ENCODE measurements at regions of chr15 and their contacts with region 1.

Region 1: GRCh38 chr15:25464784-25465183 is 26.0 kb upstream of the UBE3A start:
- DNase-seq: no peak
- ATAC-seq: peak in 1 of 3 donors; percentile 24
- H3K4me3 ChIP-seq: no peak overlapping the region
- H3K4me3 Mint-ChIP-seq: no peak overlapping the region
- H3K27ac ChIP-seq: no peak overlapping the region
- H3K27ac Mint-ChIP-seq: peak overlapping the region in 1 of 2 donors; percentile 15
- H3K4me1 ChIP-seq: no peaks in the 10 kb centered on the region
- H3K4me1 Mint-ChIP-seq: peaks cover 9% of the 10 kb centered on the region in 2 donors
- H3K27me3 ChIP-seq: peaks cover 3% of the 10 kb centered on the region
- H3K27me3 Mint-ChIP-seq: peaks cover 0 to 2% of the 10 kb centered on the region in 2 donors
- CTCF ChIP-seq: no peak

Region 2: GRCh38 chr15:25410649-25411048 is 54.1 kb before region 1 on chr15:
- intact Hi-C with region 1: loop called (anchors 5 kb)
- DNase-seq: no peak
- ATAC-seq: no peak
- H3K4me3 ChIP-seq: no peak overlapping the region
- H3K4me3 Mint-ChIP-seq: no peak overlapping the region
- H3K27ac ChIP-seq: no peak overlapping the region
- H3K27ac Mint-ChIP-seq: no peak overlapping the region
- H3K4me1 ChIP-seq: peaks cover 6% of the 10 kb centered on the region
- H3K4me1 Mint-ChIP-seq: peaks cover 55 to 62% of the 10 kb centered on the region in 2 donors
- H3K27me3 ChIP-seq: no peaks in the 10 kb centered on the region
- H3K27me3 Mint-ChIP-seq: no peaks in the 10 kb centered on the region
- CTCF ChIP-seq: no peak

Measured in natural killer cell (primary cell).